ENCODE measurements at regions of chr3 and their contacts with region 1.

Region 1: DNA sequence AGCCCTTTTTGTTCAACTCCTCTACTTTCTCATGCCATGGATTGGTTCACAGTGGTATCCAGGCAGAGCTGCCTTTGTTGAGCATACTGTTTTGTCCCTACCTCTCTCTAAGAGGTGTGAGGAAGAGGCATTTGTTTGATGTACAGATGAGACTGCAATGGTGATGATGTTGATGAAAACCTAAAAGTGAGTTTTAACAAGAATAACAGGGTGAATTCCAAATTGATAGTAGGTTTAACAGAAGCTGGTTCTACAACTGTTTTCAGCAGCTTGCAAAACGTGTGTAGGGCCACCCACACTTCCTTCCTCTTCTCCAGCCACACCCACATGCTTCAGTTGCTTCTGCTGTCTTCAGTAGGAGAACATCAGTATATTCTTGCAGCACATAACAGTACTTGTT is 10.2 kb downstream of the SNRK start:
- DNase-seq: peak in 4 of 5 donors; percentile 41 to 48 (median 42)
- ATAC-seq: peak in 3 of 4 donors; percentile 43 to 82 (median 47)
- H3K4me3 ChIP-seq: peak overlapping the region in 1 of 12 donors; percentile 23
- H3K27ac ChIP-seq: peak overlapping the region in 2 of 12 donors; percentile 21 to 71
- H3K4me1 ChIP-seq: peaks cover 20 to 99% (median 74%) of the 10 kb centered on the region in 12 donors
- H3K27me3 ChIP-seq: no peaks in the 10 kb centered on the region
- CTCF ChIP-seq: no peak
- POLR2A ChIP-seq: no peak

Region 2: GRCh38 chr3:43423142-43423541 is 126.6 kb after region 1 on chr3:
- intact Hi-C with region 1: loop called in 1 of 10 experiments (anchors 10 kb)
- DNase-seq: peak in 4 of 5 donors; percentile 32 to 51 (median 46)
- ATAC-seq: peak; percentile 11 to 58 (median 32)
- H3K4me3 ChIP-seq: no peak overlapping the region
- H3K27ac ChIP-seq: peak overlapping the region; percentile 12 to 95 (median 79)
- H3K4me1 ChIP-seq: peaks cover 0 to 55% (median 16%) of the 10 kb centered on the region in 12 donors
- H3K27me3 ChIP-seq: no peaks in the 10 kb centered on the region
- CTCF ChIP-seq: no peak
- POLR2A ChIP-seq: no peak

Measured in heart left ventricle (tissue), 16 donors.